ENCODE measurements at regions of chr20 and their contacts with region 1.

Region 1: GRCh38 chr20:1503564-1504227 is 12.5 kb upstream of the SIRPB2 start:
- DNase-seq: peak; percentile 78
- H3K4me3 Mint-ChIP-seq: no peak overlapping the region
- H3K27ac Mint-ChIP-seq: peak overlapping the region; percentile 41
- H3K4me1 Mint-ChIP-seq: peaks cover 44% of the 10 kb centered on the region
- H3K27me3 Mint-ChIP-seq: no peaks in the 10 kb centered on the region
- CTCF ChIP-seq: peak; percentile 91

Region 2: DNA sequence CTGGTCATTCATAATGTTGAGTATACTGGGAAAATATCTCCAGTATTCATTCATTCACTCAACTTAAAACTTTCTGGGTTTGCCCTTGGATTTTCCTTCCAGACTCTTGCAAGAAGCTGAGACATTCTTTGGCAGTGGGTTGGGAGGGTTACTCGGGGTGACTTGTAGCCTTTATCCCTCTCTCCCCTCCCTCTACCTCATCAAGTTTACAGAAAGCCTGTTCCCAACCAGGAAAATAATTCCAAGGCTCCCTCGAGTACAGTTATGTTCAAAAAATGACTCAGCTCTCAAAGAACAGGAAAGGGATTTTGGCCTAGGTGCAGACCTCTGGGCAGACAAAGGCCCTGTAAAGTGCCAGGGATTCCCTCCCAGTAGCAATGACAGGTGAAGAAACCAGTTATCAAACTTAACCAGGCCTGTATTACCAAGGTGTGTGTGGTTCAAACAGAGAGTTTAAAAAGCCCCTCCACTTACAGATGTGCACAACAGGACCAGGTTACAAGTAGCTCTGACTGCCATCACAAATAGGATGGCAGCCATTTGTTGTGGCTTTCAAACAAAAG is 133.1 kb before region 1 on chr20:
- CTCF ChIA-PET with region 1: no interaction called
- intact Hi-C with region 1: no loop called
- DNase-seq: no peak
- H3K4me3 Mint-ChIP-seq: no peak overlapping the region
- H3K27ac Mint-ChIP-seq: no peak overlapping the region
- H3K4me1 Mint-ChIP-seq: peaks cover 1% of the 10 kb centered on the region
- H3K27me3 Mint-ChIP-seq: no peaks in the 10 kb centered on the region
- CTCF ChIP-seq: no peak

Region 3: DNA sequence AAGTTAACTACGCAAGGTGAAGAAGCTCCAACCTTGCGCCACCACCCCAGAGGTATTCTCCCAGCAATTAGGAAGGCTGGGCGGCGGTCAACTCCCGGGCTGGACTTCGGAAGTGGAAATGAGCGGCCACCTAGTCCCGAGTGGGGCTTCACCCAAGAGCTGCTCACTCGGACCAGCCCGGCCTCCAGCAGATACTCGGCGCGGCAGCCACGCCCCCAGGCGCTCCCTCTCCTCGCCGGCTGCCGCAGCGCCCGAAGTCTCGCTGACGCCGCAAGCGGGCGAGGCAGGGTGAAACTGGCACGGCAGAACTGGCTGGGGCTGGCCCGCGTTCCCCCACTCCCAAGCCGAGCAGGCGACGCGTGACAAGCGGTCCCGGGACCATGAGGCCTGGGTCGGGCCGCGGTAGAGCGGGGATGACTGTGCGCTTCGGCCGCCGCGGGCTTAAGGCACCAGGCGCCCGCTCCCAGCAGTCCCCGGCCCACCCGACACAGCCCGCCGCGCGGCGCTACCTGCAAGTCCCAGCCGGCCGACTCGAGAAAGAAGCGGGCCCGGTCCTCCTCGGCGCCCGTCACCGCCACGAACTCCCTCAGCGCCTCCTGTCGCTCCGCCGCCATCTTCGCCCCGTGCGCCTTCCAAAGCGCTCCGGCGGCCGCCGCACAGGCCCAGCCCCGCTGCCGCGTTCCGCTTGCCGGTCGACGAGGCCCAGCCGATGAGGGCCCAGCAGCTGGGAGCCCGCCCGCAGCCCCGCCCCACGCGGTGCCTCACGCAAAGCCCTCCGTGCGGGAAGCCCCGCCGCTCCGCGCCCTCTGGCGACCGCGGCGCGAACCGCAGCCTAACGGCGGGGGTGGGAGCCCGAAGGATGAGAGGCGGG is 37.2 kb before region 1 on chr20 and contains the start of gene NSFL1C:
- CTCF ChIA-PET with region 1: interaction called, 43 read pairs
- intact Hi-C with region 1: loop called (anchors 1 kb)
- DNase-seq: peak; percentile 96
- H3K4me3 Mint-ChIP-seq: peak within 1 kb of the TSS; percentile 68
- H3K27ac Mint-ChIP-seq: peak within 1 kb of the TSS; percentile 98
- H3K4me1 Mint-ChIP-seq: peaks cover 53% of the 10 kb centered on the region
- H3K27me3 Mint-ChIP-seq: no peaks in the 10 kb centered on the region
- CTCF ChIP-seq: peak; percentile 95
- total RNA-seq, gene NSFL1C: 81.0 and 86.3 TPM in 2 replicates

Region 4: GRCh38 chr20:1474825-1475603 is 28.7 kb before region 1 on chr20:
- CTCF ChIA-PET with region 1: interaction called, 24 read pairs
- intact Hi-C with region 1: loop called (anchors 1 kb)
- DNase-seq: peak; percentile 36
- H3K4me3 Mint-ChIP-seq: no peak overlapping the region
- H3K27ac Mint-ChIP-seq: peak overlapping the region; percentile 5
- H3K4me1 Mint-ChIP-seq: peaks cover 42% of the 10 kb centered on the region
- H3K27me3 Mint-ChIP-seq: no peaks in the 10 kb centered on the region
- CTCF ChIP-seq: no peak

Region 5: DNA sequence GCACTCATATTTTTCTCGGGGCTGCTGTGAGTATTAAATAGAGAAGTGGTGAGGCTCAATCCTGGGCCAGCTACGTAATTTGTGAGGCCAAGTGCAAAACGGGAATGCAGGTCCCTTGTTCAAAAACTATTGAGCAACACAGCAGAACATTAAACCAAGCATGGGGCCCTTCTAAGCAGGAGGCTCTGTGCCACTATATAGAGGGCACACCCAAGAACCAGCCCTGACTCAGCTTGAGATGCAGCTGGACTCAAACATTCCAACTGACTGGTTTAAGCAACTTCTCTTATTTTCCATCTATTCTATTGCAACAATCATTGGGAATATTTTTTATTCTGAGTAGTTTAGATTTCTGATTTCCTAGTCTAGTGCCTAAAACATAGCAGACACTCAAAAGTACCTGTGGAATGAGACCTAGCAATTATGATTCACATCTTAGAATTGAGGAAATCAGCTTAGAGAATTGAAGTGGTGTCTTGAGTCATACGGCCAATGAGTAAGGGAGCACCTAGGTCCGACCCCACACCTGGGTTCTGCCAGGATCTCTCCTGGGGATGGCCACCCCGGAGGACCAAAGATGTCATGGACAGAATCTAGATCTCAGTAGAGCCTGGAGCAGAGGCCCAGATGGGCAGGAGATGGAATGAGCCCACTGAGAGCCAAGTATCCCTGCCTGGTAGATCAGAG is 13.8 kb before region 1 on chr20:
- CTCF ChIA-PET with region 1: interaction called, 14 read pairs
- intact Hi-C with region 1: no loop called
- DNase-seq: peak; percentile 41
- H3K4me3 Mint-ChIP-seq: no peak overlapping the region
- H3K27ac Mint-ChIP-seq: peak overlapping the region; percentile 68
- H3K4me1 Mint-ChIP-seq: peaks cover 31% of the 10 kb centered on the region
- H3K27me3 Mint-ChIP-seq: no peaks in the 10 kb centered on the region
- CTCF ChIP-seq: no peak

Region 6: GRCh38 chr20:1776681-1777475 is 273.2 kb after region 1 on chr20:
- CTCF ChIA-PET with region 1: interaction called, 10 read pairs
- intact Hi-C with region 1: no loop called
- DNase-seq: peak; percentile 83
- H3K4me3 Mint-ChIP-seq: peak overlapping the region; percentile 80
- H3K27ac Mint-ChIP-seq: peak overlapping the region; percentile 87
- H3K4me1 Mint-ChIP-seq: peaks cover 12% of the 10 kb centered on the region
- H3K27me3 Mint-ChIP-seq: peaks cover 15% of the 10 kb centered on the region
- CTCF ChIP-seq: peak; percentile 61